Posterior vena cava (tissue), 2 donors: ENCODE measurements at regions of chr7 and their contacts with region 1.

Region 1: GRCh38 chr7:17396692-17397091 is 98.2 kb downstream of the AHR start:
- DNase-seq: no peak

Region 2: GRCh38 chr7:15998617-15999016 is 1398.1 kb before region 1 on chr7:
- intact Hi-C with region 1: no loop called
- DNase-seq: no peak

Region 3: GRCh38 chr7:17422966-17423365 is 26.3 kb after region 1 on chr7:
- intact Hi-C with region 1: loop called in 1 of 2 experiments (anchors 1 kb)
- DNase-seq: no peak

Region 4: DNA sequence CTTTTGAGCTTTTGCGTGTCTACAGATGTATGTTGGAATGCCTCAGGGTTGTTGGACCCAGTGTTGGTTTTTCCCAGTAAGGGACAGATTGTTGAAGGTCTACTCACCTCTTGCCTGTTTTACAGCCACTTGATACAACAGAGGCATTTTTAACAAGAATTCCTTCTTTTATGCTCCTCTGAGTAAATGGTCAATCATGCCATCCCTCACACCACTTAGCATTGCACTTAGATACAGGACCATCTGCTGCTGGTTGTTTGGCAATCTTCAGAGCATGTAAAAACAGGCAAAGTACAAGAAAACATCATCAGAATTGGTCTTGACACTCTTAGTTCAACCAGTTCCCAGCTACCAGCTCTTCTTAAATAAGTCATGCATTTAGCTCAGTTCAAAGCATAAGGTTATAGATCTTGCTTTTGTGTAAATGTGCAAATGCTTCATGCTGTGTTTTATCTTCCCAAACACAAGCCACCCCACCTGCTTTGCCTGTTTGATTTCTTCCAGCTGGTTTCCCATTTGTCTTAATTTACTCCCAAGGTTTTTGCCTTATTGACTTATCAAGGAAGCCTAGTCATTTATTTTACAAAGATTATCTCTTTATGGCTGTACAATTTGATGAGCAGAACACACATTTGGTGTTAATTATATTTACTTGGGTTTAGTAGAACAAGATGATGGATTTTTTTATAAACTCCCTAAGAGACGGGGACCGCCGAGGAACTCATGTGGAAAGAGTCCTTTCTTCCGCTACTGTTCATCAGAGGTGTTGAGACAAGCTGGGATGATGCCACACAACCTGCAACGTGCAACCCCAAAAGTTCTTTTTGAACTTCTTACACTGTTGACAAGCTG is 38.4 kb after region 1 on chr7:
- intact Hi-C with region 1: no loop called
- DNase-seq: no peak

Region 5: GRCh38 chr7:17546599-17546998 is 149.9 kb after region 1 on chr7:
- intact Hi-C with region 1: no loop called
- DNase-seq: no peak